ENCODE measurements at regions of chr3 and their contacts with region 1.

Region 1: GRCh38 chr3:156158656-156159542 is 38.5 kb downstream of the KCNAB1 start:
- DNase-seq: no peak
- H3K4me3 ChIP-seq: no peak overlapping the region
- CTCF ChIP-seq: no peak
- POLR2A ChIP-seq: no peak

Region 2: GRCh38 chr3:156396851-156397250 is 238.0 kb after region 1 on chr3:
- intact Hi-C with region 1: no loop called
- DNase-seq: no peak
- H3K4me3 ChIP-seq: no peak overlapping the region
- CTCF ChIP-seq: no peak
- POLR2A ChIP-seq: no peak

Region 3: DNA sequence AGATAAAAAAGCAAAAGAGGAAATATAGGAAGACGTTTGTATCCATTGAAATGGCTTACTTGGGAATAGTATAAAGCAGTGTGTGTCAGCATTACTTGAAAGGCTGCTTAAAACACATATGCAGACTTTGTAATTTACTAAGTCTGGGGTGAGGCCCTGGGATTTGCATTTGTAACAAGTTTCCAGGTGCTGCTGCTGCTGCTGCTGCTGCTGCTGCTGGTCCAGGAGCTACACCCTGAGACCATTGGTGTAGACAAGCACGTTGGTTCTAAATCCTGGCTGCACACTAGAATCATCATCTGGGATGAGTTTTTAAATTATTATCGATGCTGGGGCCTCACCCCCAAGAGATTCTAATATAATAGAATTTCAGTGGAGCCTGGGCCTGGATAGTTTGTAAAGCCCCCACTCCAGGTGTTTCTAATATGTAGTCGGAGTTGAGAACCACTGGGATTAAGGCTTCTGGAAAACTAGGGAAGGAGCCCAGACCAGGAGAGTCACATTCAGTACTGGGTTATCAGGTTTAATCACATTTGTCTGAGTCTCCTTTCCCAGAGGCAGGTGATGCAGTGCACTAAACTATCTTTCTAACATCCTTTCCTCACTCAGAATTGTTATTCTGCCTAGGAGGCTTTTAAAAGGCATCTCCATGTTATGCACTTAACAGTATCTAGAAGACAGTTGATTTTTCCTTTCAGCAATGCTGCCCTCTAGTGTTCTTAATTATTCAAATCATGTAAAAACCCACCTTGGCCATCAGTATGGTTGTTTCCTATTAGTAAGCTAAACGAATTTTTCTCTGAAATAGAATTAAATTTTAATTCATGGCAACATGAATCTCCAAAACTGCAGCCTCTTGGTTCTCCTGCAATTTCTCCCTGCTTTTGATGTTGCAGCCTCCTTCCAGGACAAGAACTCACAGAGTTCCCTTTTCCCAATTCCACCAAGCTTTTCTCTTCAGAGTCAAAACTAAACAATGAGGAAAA is 350.6 kb after region 1 on chr3:
- intact Hi-C with region 1: loop called (anchors 5 kb)
- DNase-seq: no peak
- H3K4me3 ChIP-seq: no peak overlapping the region
- CTCF ChIP-seq: no peak
- POLR2A ChIP-seq: no peak

Region 4: DNA sequence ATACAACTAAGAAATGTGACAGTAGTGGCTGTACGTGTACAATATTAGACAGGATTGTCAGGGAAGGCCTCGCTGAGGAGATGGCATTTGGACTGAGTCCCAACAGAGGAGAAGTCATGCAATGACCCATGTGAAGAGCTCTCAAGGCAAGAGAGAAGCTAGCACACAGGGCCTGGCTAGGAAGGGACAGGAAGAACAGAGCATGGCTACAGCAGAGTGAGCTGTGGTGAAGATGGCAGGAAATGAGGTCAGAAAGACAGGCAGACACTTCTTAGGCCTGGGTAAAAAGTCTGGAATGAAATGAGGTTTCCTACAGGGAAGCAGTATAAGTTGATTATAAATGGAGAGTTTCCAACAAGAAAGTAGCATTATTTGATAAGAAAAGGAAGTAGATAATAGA is 634.0 kb after region 1 on chr3:
- intact Hi-C with region 1: loop called (anchors 5 kb)
- DNase-seq: no peak
- H3K4me3 ChIP-seq: no peak overlapping the region
- CTCF ChIP-seq: no peak
- POLR2A ChIP-seq: no peak